Heart right ventricle (tissue), 16 donors: ENCODE measurements at regions of chr2 and their contacts with region 1.

Region 1: DNA sequence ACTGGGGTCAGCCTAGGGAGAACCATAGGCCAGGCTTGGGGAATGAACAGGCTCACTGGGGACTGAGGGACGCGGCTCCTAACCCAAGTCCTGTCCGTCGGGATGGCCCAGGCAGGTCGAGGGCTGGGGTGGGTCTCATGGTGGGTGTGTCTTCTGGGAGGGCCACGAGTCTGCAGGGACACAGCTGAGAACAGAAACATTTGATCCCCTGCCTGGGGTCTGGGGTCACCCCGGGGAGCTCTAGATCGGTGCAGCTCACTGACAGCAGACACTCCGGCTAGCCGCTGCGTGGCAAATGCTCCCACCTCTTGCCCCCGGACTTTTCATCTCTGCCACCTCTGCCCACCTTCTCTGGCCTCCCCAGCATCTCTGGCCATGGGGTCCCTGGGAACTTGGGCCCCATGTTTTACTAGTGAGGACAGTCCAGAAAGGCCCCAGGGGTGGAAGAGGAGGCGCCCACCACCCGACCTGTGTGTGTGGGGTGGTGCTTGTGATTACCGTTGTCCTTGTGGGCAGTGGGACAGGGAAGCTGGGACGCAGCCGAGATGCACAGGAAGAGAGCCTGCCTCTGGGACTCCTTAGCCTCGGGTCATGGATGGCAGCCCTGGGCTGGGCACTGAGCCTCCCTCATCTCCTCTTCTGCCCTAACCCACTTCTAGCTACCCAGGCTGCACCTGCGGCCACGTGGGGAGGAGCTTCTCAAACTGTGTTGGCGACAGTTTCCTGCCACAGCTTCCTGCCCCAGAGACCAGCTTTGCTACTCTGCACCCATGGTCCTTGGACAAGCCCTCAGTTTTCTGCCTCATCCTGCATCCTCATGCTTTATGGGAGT is 4.9 kb downstream of the ZAP70 start:
- DNase-seq: no peak
- ATAC-seq: peak in 1 of 8 donors; percentile 10
- H3K4me3 ChIP-seq: peak overlapping the region in 1 of 10 donors; percentile 36
- H3K27ac ChIP-seq: peak overlapping the region in 1 of 10 donors; percentile 75
- H3K4me1 ChIP-seq: peaks cover 0 to 3% (median 0%) of the 10 kb centered on the region in 9 donors
- H3K27me3 ChIP-seq: no peaks in the 10 kb centered on the region
- CTCF ChIP-seq: no peak

Region 2: GRCh38 chr2:97673182-97673914 is 44.9 kb before region 1 on chr2:
- intact Hi-C with region 1: no loop called
- DNase-seq: no peak
- ATAC-seq: peak in 1 of 8 donors; percentile 22
- H3K4me3 ChIP-seq: no peak overlapping the region
- H3K27ac ChIP-seq: no peak overlapping the region
- H3K4me1 ChIP-seq: no peaks in the 10 kb centered on the region
- H3K27me3 ChIP-seq: no peaks in the 10 kb centered on the region
- CTCF ChIP-seq: no peak

Region 3: DNA sequence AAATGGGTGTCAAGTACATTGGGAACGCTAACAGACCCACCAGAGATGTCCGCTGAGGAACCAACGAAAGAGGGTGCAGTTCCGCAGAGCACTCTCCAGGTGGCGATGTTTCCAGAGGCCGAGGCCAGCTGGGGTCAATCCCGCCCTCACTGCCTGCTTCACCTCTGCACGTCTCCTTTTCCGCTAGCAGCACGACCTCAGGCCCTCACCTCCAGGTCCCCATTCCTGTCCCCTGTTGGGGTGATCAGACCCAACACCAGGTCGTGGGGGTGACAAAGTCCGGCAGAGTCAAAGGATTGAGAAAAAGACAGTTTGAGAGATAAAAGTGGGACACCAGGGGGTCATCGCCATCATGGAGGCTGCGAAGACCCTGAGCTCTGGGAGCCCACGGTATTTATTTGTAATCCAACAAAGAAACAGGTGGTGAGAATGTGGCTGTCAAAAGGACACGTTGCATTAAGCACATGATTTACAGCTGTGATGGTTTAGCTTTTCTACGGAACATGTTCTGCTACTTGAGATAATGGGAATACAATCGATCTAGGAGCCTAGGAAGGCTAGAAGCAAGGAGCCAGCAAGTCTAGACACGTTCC is 22.4 kb after region 1 on chr2:
- intact Hi-C with region 1: loop called in 2 of 10 experiments (anchors 5 kb)
- DNase-seq: peak in 1 of 2 donors; percentile 45
- ATAC-seq: peak in 5 of 8 donors; percentile 16 to 55 (median 33)
- H3K4me3 ChIP-seq: no peak overlapping the region
- H3K27ac ChIP-seq: no peak overlapping the region
- H3K4me1 ChIP-seq: peaks cover 0 to 27% (median 10%) of the 10 kb centered on the region in 9 donors
- H3K27me3 ChIP-seq: no peaks in the 10 kb centered on the region
- CTCF ChIP-seq: peak; percentile 24 to 75 (median 67)

Region 4: GRCh38 chr2:97751752-97752151 is 33.5 kb after region 1 on chr2:
- intact Hi-C with region 1: loop called in 3 of 10 experiments (anchors 5 kb)
- DNase-seq: no peak
- ATAC-seq: peak in 7 of 8 donors; percentile 16 to 79 (median 69)
- H3K4me3 ChIP-seq: no peak overlapping the region
- H3K27ac ChIP-seq: peak overlapping the region in 2 of 10 donors; percentile 30 to 39
- H3K4me1 ChIP-seq: peaks cover 0 to 62% (median 20%) of the 10 kb centered on the region in 9 donors
- H3K27me3 ChIP-seq: no peaks in the 10 kb centered on the region
- CTCF ChIP-seq: no peak

Region 5: DNA sequence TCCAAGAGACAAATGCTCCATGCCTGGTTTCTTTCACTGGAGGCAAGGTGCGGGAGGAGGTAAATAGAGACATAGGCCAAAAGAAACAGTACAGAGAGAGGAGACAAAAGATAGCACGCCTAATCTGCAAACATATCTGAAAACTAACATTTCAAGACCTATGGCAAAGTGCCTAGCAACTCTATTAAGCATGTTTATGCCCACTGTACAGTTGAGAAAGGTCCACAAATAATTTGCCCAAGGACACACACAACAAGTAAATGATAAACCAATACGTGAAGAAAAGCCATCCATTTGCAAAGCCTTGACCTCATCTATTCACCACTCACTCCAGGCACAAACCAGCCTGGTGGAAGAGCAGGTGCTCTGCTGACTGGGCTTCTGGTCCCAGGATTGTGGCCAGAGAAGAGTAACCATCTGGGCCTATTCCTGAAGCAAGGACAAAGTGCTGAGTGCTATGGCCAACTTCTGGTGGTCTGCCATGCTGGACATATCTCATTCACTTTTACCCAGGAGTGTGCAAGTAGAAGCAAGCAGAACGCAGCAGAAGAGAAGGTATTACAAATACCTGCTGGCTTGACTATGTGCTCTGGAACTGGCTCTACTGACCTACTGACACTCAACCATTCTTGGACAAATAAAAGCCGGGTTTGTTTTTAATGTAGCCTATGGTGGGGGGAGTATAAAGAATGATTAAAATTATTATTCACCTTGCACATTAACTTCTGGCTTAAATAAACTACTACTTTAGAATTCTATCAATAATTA is 252.2 kb after region 1 on chr2:
- intact Hi-C with region 1: no loop called
- DNase-seq: no peak
- ATAC-seq: no peak
- H3K4me3 ChIP-seq: no peak overlapping the region
- H3K27ac ChIP-seq: no peak overlapping the region
- H3K4me1 ChIP-seq: peaks cover 3 to 55% (median 38%) of the 10 kb centered on the region in 9 donors
- H3K27me3 ChIP-seq: no peaks in the 10 kb centered on the region
- CTCF ChIP-seq: no peak